Prostate gland (tissue), 2 donors: ENCODE measurements at regions of chr17 and their contacts with region 1.

Region 1: DNA sequence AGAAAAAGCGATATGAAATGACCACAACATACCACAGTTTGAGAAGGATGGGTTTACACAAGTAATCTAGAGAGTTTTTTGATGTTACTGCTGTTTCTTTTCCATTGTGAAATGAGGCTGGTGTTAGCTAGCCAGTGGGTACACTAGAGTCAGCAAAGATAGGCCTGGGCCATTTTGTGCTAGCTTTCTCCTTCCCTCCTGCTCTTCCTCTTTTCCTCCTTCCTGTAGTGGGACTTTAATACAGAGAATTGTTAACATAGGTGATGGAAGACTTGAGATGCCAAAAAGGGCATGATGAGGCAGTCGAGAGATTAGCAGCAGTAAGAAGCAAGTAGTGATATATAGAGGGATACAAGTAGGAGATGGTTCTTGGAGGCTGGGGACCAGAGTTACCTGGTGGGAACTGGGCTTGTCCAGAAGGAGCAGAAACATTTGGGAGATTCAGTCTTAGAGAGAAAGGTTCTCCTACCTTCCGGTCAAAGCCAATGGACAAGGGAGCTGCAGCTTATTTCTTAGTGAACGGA is 7.7 kb downstream of the NSRP1 start:
- DNase-seq: no peak
- H3K4me3 ChIP-seq: no peak overlapping the region
- H3K27ac ChIP-seq: no peak overlapping the region
- H3K4me1 ChIP-seq: no peaks in the 10 kb centered on the region
- H3K27me3 ChIP-seq: no peaks in the 10 kb centered on the region
- CTCF ChIP-seq: no peak
- POLR2A ChIP-seq: no peak

Region 2: DNA sequence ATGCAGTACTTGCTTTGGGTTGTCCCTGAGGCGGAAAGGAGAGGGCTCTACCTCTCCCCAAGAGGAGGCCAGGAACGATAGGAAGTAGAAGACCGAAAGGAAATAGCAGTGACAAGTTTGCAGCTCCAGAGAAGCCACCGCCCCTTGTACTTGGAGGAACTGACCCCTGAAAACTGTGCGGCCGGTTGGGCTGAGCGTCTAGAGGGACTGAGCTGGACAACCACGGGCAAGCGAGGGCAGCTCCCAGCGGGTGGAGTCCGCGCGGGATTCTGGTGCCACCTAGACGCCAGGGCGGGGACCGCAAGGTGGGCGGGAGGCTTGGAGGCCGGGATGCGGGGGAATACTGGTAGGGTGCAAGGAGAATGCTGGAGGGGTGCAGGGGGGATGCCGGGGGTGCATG is 112.4 kb after region 1 on chr17:
- intact Hi-C with region 1: loop called (anchors 10 kb)
- DNase-seq: peak; percentile 29
- H3K4me3 ChIP-seq: no peak overlapping the region
- H3K27ac ChIP-seq: no peak overlapping the region
- H3K4me1 ChIP-seq: peaks cover 3% of the 10 kb centered on the region
- H3K27me3 ChIP-seq: no peaks in the 10 kb centered on the region
- CTCF ChIP-seq: peak in 3 of 4 experiments; percentile 8 to 33 (median 29)
- POLR2A ChIP-seq: no peak

Region 3: GRCh38 chr17:30278032-30278431 is 153.7 kb after region 1 on chr17:
- intact Hi-C with region 1: loop called (anchors 5 kb)
- DNase-seq: no peak
- H3K4me3 ChIP-seq: no peak overlapping the region
- H3K27ac ChIP-seq: no peak overlapping the region
- H3K4me1 ChIP-seq: no peaks in the 10 kb centered on the region
- H3K27me3 ChIP-seq: no peaks in the 10 kb centered on the region
- CTCF ChIP-seq: peak in 2 of 4 experiments; percentile 30 to 37
- POLR2A ChIP-seq: no peak